ENCODE measurements at regions of chr16 and their contacts with region 1.

Region 1: DNA sequence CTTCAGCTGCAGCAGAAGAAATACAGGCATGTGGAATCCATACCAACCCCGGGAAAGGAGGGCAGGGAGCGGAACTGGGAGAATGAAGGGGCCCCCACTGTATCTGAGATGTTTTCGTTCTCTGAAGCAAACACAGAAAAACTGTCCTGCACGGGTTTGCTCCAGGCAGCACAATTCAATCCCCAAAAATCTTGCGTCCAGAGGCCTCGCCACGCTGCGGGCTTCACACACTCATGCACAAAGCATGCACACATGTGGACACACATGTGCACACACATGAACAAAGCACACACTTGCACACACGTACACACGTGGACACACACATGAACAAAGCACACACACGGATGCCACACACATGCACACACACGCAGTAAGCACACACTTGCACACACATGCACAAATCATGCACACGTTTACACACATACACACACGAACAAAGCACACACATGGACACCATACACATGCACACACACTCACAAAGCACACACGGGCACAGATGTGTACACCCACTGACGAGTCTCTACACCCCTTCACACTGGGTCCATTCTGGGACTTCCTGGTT is 27.3 kb downstream of the COX4I1 start:
- DNase-seq: no peak
- H3K4me3 ChIP-seq: no peak overlapping the region
- H3K27ac ChIP-seq: no peak overlapping the region
- H3K4me1 ChIP-seq: no peaks in the 10 kb centered on the region
- H3K27me3 ChIP-seq: no peaks in the 10 kb centered on the region
- CTCF ChIP-seq: no peak
- EP300 ChIP-seq: no peak
- POLR2A ChIP-seq: no peak

Region 2: GRCh38 chr16:86016201-86016871 is 189.6 kb after region 1 on chr16:
- intact Hi-C with region 1: loop called (anchors 1 to 10 kb)
- DNase-seq: peak in 4 of 5 donors; percentile 19 to 40 (median 28)
- H3K4me3 ChIP-seq: no peak overlapping the region
- H3K27ac ChIP-seq: no peak overlapping the region
- H3K4me1 ChIP-seq: no peaks in the 10 kb centered on the region
- H3K27me3 ChIP-seq: no peaks in the 10 kb centered on the region
- CTCF ChIP-seq: peak; percentile 28 to 71 (median 29)
- EP300 ChIP-seq: no peak
- POLR2A ChIP-seq: no peak

Measured in ovary (tissue), 10 donors.